Activated CD4-positive, alpha-beta memory T cell treated with anti-CD3 and anti-CD28 coated beads for 36 hours (primary cell): ENCODE measurements at regions of chr17 and their contacts with region 1.

Region 1: GRCh38 chr17:7844292-7845154 is 10.3 kb upstream of the TMEM88 start:
- DNase-seq: peak; percentile 92
- H3K4me3 Mint-ChIP-seq: peak overlapping the region; percentile 85
- H3K27ac Mint-ChIP-seq: peak overlapping the region; percentile 95
- H3K4me1 Mint-ChIP-seq: peaks cover 45% of the 10 kb centered on the region
- H3K27me3 Mint-ChIP-seq: no peaks in the 10 kb centered on the region

Region 2: DNA sequence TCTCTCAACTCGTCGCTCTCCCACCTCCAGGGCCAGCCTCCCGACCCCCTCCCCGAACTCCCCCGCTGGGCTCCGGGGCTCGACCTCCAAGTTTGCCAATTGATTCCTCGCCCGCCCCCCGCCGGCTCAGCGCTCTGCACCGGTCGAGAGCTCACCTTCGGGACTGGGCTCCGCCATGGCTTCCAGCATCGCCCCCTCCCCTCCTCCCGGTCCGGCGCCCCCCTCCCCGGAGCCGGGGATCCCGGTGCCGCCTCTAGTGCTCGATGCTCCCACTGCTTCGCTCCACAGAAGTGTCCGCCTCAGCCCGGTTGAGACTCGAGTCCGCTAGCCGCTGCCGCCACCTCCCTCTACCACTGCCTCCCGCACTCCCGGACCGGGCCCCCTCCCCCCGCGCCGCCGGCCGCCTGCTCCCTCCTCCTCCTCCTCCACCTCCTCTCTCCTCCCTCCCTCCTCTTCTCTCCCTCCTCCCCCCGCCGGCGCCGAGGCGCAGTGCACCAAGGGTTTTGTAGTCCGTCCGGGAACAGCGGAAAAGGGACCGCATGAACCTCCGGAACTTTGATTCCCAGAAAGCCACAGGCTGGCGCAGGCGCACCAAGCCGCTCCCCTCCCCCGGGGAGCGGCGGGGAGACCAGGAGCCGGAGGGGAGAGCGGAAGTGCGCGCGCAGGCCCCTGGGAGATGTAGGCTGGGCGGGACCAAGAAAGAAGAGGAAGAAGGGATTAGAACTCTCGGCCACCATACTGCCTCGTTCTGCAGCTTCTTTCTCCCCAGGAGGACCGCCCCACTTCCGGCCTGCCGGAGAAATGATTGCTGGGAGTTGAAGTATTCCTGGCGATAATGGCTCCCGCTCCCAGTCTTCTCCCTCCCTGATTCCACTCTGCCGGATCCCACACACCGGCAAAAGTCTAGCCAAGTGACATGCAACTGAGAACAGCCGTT is 605.2 kb before region 1 on chr17 and contains the start of gene PHF23:
- CTCF ChIA-PET with region 1: no interaction called
- POLR2A ChIA-PET with region 1: no interaction called
- intact Hi-C with region 1: loop called (anchors 5 kb)
- DNase-seq: peak; percentile 99
- H3K4me3 Mint-ChIP-seq: peak within 1 kb of the TSS; percentile 94
- H3K27ac Mint-ChIP-seq: peak within 1 kb of the TSS; percentile 97
- H3K4me1 Mint-ChIP-seq: peaks cover 59% of the 10 kb centered on the region
- H3K27me3 Mint-ChIP-seq: peaks cover 4% of the 10 kb centered on the region
- total RNA-seq, gene PHF23: 24.0 to 28.7 TPM

Region 3: GRCh38 chr17:7572588-7573323 is 271.8 kb before region 1 on chr17:
- CTCF ChIA-PET with region 1: no interaction called
- POLR2A ChIA-PET with region 1: no interaction called
- intact Hi-C with region 1: loop called (anchors 5 kb)
- DNase-seq: peak; percentile 100
- H3K4me3 Mint-ChIP-seq: peak overlapping the region; percentile 99
- H3K27ac Mint-ChIP-seq: peak overlapping the region; percentile 100
- H3K4me1 Mint-ChIP-seq: peaks cover 50% of the 10 kb centered on the region
- H3K27me3 Mint-ChIP-seq: peaks cover 2% of the 10 kb centered on the region

Region 4: DNA sequence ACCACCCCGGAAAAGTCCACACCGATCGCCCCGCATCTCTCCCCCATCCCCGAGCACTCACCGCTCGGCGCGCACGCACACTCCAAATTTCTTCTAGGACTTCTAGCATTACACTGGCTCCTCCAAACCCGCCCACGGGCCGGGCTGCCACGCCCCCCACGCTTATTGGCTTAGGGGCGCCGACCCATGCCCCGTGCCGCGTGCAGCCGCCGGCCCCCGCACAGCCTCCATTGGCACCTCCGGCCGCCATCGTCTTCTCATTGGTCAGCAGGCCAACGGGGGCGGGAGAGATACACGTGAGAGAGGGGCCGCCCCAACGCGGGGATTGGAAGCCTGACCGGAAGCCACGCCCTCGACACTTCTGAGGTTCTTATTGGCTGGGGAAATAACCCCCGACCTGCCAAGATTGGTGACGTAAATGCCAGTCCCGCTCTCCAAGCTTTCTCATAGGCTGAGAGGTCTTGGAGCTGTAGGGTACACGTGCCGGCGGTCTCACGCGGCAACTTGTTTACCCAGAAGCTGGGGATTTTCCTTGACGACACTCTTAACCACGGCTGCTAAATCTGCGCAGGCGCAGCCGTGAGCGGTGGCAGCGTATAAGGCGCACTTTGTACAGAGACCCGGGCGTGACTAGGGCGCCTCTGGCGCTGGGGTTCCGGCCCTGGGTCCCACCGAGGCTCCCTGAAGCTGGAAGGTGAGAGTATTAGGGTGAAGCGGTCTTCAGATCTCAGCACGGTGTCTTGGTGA is 311.9 kb after region 1 on chr17:
- CTCF ChIA-PET with region 1: no interaction called
- POLR2A ChIA-PET with region 1: no interaction called
- intact Hi-C with region 1: loop called (anchors 5 kb)
- DNase-seq: peak; percentile 100
- H3K4me3 Mint-ChIP-seq: no peak overlapping the region
- H3K27ac Mint-ChIP-seq: no peak overlapping the region
- H3K4me1 Mint-ChIP-seq: peaks cover 56% of the 10 kb centered on the region
- H3K27me3 Mint-ChIP-seq: no peaks in the 10 kb centered on the region